Activated T-helper 1 cell treated with anti-CD3 and anti-CD28 coated beads, Interleukin-12 subunit alpha, Interleukin-12 subunit beta, Interleukin-2, Interleukin-4 antibody, amounts not matched to agents 30 ng/mL and 10 ng/mL and 1 ng/mL, durations not matched to agents 14 hours and 24 hours and 36 hours (primary cell): ENCODE measurements at regions of chr13 and their contacts with region 1.

Region 1: DNA sequence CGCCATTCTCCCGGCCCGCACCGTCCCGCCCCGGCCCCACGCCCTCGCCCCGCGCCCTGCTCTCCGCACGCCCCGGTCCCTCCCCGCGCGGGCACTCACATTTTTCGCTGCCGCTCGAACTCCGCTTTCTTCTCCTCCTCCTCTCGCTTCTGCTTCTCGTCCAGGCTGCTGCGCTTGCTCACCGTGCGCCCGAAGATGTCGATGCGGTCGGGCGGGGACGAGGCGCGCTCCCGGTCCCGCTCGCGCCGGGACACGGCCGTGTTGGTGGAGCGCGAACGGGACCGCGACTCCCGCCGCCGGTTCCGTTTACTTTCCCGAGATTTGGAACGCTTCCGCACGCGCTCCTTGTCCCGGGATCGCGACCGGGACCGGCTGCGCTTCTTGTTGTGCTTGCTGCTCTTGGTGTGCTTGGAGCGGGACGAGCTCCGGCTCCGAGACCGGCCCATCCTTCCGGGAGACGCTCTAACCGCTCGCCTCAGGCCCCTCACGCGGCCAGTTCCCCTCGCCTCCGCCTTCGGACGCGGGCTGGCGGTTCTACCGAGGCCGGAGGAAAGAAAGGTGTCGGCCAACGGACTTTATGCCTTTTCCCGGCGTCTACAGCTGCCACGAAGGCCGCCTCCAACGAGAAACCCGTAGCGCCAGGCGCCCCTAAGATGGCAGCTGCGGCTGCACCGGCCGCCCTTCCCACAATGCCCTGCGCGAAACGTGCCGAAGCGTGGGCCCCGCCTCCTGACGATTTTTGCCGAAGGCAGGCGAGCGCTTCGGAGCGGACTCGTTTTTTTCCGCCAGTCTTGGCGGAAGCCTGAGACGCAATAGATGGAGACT is at the start of gene ARGLU1:
- DNase-seq: peak; percentile 94
- H3K4me3 Mint-ChIP-seq: peak within 1 kb of the TSS; percentile 99
- H3K27ac Mint-ChIP-seq: peak within 1 kb of the TSS; percentile 98
- H3K4me1 Mint-ChIP-seq: peaks cover 44% of the 10 kb centered on the region
- H3K27me3 Mint-ChIP-seq: peaks cover 2% of the 10 kb centered on the region
- total RNA-seq, gene ARGLU1: 89.8 and 91.5 TPM in 2 replicates

Region 2: GRCh38 chr13:105139380-105140285 is 1428.1 kb before region 1 on chr13:
- intact Hi-C with region 1: loop called (anchors 10 kb)
- DNase-seq: peak; percentile 59
- H3K4me3 Mint-ChIP-seq: peak overlapping the region; percentile 88
- H3K27ac Mint-ChIP-seq: peak overlapping the region; percentile 96
- H3K4me1 Mint-ChIP-seq: peaks cover 20% of the 10 kb centered on the region
- H3K27me3 Mint-ChIP-seq: peaks cover 4% of the 10 kb centered on the region

Region 3: DNA sequence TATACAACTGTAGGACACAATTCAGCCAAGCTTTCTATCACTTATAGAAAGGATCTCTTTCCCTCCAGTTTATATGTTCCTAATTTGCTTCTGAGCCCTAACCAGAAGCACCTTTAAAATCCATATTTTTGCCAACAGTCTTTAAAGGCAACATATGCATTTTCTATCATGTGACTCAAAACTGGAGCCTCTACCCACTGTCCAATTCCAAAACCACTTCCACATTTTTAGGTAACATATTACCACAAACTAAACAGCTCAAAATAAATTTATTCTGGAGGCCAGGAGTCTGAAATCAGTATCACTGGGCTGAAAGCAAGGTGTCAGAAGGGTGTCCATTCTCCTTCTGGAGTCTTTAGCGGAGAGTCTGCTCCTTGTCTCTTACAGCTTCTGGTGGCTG is 16.3 kb before region 1 on chr13:
- intact Hi-C with region 1: loop called (anchors 2 kb)
- DNase-seq: no peak
- H3K4me3 Mint-ChIP-seq: no peak overlapping the region
- H3K27ac Mint-ChIP-seq: no peak overlapping the region
- H3K4me1 Mint-ChIP-seq: peaks cover 42% of the 10 kb centered on the region
- H3K27me3 Mint-ChIP-seq: no peaks in the 10 kb centered on the region

Region 4: DNA sequence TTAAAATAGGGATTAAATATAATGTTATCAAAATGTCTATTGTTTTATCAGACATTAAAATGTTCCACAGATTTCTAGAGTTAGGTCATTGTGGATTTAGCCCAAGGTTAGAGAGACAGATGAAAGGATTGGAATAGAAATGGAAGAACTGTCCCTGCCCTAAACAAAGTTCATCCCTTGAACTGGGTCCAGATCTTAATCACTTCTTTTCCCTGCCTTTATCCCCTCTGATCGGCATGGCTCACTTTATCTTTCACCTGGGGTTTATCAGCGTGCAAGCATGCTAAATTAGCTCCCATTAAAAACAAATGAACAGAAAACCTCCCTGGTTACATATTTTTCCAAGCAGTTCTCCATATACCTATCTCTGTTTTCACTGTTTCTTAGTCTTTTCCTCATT is 23.6 kb after region 1 on chr13:
- intact Hi-C with region 1: loop called (anchors 1 kb)
- DNase-seq: no peak
- H3K4me3 Mint-ChIP-seq: no peak overlapping the region
- H3K27ac Mint-ChIP-seq: no peak overlapping the region
- H3K4me1 Mint-ChIP-seq: no peaks in the 10 kb centered on the region
- H3K27me3 Mint-ChIP-seq: peaks cover 8% of the 10 kb centered on the region

Region 5: DNA sequence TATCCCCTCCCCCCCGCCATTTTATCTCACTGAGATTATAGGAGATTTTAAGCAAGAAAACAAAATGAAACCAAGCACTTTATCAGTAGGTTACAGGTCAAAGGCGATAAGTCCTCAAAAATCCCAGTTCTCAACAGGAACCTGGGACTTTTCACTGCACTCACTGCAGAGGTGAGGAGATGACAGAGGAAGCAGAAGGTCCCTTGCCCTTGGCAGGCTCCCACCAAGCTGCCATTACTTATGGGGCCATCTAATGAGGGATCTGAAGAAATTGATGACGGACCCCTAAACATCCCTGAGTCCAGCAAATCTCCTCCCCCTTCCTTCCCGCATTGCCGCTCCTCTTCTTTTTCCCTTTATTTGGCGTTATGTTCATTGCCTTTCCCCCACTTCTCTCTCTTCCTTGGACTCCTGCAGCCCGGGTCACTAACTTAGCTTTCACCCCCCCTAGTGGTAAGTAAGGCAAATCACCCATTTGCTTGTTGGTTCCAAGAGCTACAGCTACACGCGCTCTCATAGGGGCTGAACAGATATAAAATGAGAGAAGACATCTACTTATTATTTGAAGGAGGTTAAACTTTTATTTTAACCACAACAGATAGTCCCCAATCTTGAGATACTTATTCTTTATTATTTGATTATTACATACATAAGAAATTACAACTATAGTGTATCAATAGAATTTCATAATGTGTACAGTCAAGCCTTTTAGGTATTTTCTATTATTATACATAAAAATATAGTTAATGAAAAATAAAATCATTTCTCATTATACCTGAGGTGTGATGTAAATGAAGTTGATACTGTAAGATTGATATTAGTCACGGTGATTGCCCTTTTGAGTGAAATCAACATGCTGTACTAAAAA is 52.2 kb after region 1 on chr13:
- intact Hi-C with region 1: loop called (anchors 2 kb)
- DNase-seq: no peak
- H3K4me3 Mint-ChIP-seq: no peak overlapping the region
- H3K27ac Mint-ChIP-seq: no peak overlapping the region
- H3K4me1 Mint-ChIP-seq: peaks cover 10% of the 10 kb centered on the region
- H3K27me3 Mint-ChIP-seq: peaks cover 8% of the 10 kb centered on the region

Region 6: DNA sequence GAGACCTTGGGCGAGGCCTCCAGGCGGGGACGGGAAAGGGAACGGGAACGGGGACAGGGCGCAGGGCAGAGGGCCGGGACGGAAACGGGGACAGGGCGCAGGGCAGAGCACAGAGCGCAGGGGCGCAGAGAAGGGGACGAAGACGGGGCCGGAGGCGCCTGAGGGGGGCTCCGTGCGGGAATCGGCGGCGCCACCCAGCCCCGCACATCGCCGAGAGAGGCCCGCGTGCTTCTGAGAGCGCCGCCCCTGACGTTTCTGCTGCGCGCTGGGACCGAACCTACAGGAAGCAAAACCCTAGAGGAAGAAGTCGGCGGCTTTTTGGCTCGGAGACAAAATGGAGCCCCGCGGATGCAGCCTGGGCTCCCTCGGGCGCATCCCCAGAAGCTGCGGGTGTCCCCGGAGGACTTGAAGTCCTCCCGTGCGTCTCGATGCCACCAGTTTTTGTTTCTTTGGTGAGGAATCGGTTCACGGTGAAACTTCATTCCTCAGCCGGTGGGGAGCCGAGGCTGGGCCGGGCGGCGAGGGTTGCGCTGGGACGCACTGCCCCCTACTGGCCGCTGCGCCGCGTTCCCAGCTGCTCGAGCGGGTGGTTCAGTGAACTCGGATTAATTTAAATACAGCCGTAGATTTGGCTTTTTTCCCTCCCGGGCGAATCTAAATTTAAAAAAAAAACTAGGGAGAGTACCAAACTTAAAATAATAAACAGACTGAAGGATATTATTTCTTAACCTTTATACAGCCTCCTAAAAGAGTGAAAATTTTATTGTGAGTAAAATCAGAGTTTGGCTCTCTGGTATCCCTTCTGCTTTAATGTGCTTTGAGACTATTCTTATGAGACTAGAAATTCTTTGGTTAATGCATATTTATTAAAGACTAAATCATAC is 350.2 kb after region 1 on chr13:
- intact Hi-C with region 1: loop called (anchors 5 kb)
- DNase-seq: peak; percentile 51
- H3K4me3 Mint-ChIP-seq: peak overlapping the region; percentile 78
- H3K27ac Mint-ChIP-seq: no peak overlapping the region
- H3K4me1 Mint-ChIP-seq: no peaks in the 10 kb centered on the region
- H3K27me3 Mint-ChIP-seq: peaks cover 21% of the 10 kb centered on the region